GM18951 (cell line): ENCODE measurements at regions of chr17 and their contacts with region 1.

Region 1: DNA sequence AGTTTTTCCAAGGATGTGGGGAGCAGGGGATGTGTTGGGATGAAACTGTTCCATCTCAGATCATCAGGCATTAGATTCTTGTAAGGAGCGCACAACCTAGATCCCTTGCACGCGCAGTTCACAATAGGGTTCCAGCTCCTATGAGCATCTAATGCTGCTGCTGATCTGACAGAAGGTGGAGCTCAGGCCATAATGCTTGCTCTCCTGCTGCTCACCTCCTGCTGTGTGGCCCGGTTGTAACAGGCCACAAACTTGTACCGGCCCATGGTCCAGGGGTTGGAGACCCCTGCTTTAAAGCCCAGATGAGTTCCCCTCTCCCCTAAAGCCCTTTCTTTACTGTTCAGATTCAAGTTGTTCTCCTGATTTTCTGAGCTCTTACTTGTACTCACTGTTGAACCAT is 44.8 kb downstream of the RNF135 start:
- POLR2A ChIP-seq: no peak

Region 2: GRCh38 chr17:30187573-30187972 is 828.1 kb before region 1 on chr17:
- in situ Hi-C with region 1: no loop called
- POLR2A ChIP-seq: no peak

Region 3: GRCh38 chr17:30605027-30605426 is 410.6 kb before region 1 on chr17:
- in situ Hi-C with region 1: loop called (anchors 10 kb)
- POLR2A ChIP-seq: no peak

Region 4: DNA sequence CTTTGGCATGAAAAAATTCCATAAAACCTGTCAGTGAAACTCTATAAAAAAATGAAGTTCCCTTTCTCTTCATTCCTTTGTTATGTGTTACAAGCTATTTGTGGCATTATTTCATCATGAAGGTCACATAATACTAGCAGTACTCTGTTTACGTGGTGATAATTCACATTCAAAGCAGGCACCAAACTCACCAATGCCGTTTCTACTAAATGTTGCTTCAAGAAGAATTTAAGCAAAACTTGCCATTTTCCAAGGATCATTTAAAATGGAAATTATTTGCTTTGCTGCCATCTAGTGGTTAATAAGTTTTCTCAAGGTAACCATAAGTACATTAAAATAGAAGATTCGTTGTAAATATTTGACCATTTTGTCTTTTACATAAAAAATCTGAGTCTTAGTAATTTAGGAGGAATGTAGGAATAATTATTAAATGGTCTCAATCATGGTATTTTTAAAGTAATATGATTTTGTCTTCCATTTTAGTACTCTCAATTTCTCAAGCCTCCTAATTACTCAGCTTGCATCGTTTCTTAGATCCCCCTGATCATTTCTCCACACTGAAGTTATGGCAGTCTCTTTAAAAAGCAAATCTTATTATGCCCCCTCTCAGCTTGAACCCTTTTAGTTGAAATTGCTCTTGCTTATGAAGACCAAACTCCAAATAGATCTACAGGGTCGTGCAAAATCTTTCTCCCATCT is 200.6 kb after region 1 on chr17:
- in situ Hi-C with region 1: loop called (anchors 10 kb)
- POLR2A ChIP-seq: no peak